Caco-2 (cell line): ENCODE measurements at regions of chr1 and their contacts with region 1.

Region 1: GRCh38 chr1:186482661-186483255 is 21.8 kb upstream of the PDC start:
- DNase-seq: peak; percentile 67 to 75
- H3K4me3 ChIP-seq: no peak overlapping the region
- H3K4me3 Mint-ChIP-seq: no peak overlapping the region
- H3K27ac Mint-ChIP-seq: no peak overlapping the region
- H3K4me1 ChIP-seq: peaks cover 53% of the 10 kb centered on the region
- H3K4me1 Mint-ChIP-seq: peaks cover 37% of the 10 kb centered on the region
- H3K27me3 ChIP-seq: no peaks in the 10 kb centered on the region
- H3K27me3 Mint-ChIP-seq: no peaks in the 10 kb centered on the region
- CTCF ChIP-seq: peak; percentile 88 to 94

Region 2: DNA sequence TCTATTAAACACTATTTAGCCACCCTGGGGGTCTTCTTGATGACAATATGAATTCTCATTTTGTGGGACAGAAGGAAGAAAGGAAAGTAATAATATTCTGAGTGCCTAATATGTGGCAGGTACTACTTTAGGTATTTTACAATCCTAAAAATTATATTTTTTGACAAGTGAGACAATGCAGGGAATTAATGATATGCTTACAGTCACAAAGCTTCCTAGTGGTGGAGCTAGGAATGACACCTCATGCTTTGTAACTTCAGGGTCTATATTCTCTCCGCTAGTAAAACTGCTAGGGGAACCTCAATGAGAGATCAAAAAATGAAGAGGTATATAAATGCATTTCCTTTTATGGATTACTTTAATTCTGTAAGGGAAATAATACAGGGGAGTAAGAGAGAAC is 152.0 kb before region 1 on chr1:
- CTCF ChIA-PET with region 1: no interaction called
- POLR2A ChIA-PET with region 1: no interaction called
- intact Hi-C with region 1: no loop called
- DNase-seq: peak in 1 of 2 experiments; percentile 21
- H3K4me3 ChIP-seq: no peak overlapping the region
- H3K4me3 Mint-ChIP-seq: no peak overlapping the region
- H3K27ac Mint-ChIP-seq: no peak overlapping the region
- H3K4me1 ChIP-seq: no peaks in the 10 kb centered on the region
- H3K4me1 Mint-ChIP-seq: no peaks in the 10 kb centered on the region
- H3K27me3 ChIP-seq: no peaks in the 10 kb centered on the region
- H3K27me3 Mint-ChIP-seq: no peaks in the 10 kb centered on the region
- CTCF ChIP-seq: peak; percentile 36 to 44

Region 3: DNA sequence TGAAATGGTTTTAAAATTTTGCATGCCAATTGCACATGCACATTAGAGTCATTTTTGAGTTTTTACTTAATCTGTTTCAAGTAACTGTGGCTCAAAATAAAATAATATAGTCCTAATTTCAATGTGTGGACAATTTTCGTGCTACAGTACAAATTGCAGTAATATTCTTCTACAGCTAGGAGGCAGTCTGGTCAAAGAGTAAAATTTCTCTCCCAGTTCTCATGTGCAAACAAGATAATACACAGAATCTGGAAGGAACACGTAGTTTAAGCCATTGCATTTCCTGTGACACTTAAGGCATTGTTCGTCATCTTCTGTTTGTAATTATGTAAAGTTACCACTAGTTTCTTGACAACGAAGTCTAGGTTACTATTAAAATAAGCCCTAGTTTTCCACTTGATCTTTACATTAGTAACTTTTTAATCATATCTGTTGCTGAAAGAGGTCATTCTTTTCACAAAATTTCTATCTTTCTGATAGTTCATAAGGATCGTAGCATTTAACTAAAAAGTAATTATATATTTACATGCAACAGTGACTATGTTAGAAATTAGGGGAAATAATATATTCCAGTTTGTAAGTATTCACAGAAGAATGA is 78.2 kb before region 1 on chr1:
- CTCF ChIA-PET with region 1: interaction called, 5 read pairs
- POLR2A ChIA-PET with region 1: no interaction called
- intact Hi-C with region 1: loop called (anchors 2 kb)
- DNase-seq: peak in 1 of 2 experiments; percentile 43
- H3K4me3 ChIP-seq: no peak overlapping the region
- H3K4me3 Mint-ChIP-seq: no peak overlapping the region
- H3K27ac Mint-ChIP-seq: no peak overlapping the region
- H3K4me1 ChIP-seq: no peaks in the 10 kb centered on the region
- H3K4me1 Mint-ChIP-seq: peaks cover 6% of the 10 kb centered on the region
- H3K27me3 ChIP-seq: no peaks in the 10 kb centered on the region
- H3K27me3 Mint-ChIP-seq: no peaks in the 10 kb centered on the region
- CTCF ChIP-seq: peak; percentile 58 to 63

Region 4: GRCh38 chr1:186569856-186570255 is 87.1 kb after region 1 on chr1:
- CTCF ChIA-PET with region 1: no interaction called
- POLR2A ChIA-PET with region 1: no interaction called
- intact Hi-C with region 1: no loop called
- DNase-seq: no peak
- H3K4me3 ChIP-seq: no peak overlapping the region
- H3K4me3 Mint-ChIP-seq: no peak overlapping the region
- H3K27ac Mint-ChIP-seq: no peak overlapping the region
- H3K4me1 ChIP-seq: peaks cover 8% of the 10 kb centered on the region
- H3K4me1 Mint-ChIP-seq: peaks cover 14% of the 10 kb centered on the region
- H3K27me3 ChIP-seq: no peaks in the 10 kb centered on the region
- H3K27me3 Mint-ChIP-seq: no peaks in the 10 kb centered on the region
- CTCF ChIP-seq: no peak

Region 5: GRCh38 chr1:186605762-186606350 is 123.1 kb after region 1 on chr1:
- CTCF ChIA-PET with region 1: interaction called, 3 read pairs
- POLR2A ChIA-PET with region 1: no interaction called
- intact Hi-C with region 1: loop called (anchors 1 kb)
- DNase-seq: peak; percentile 70 to 72
- H3K4me3 ChIP-seq: no peak overlapping the region
- H3K4me3 Mint-ChIP-seq: no peak overlapping the region
- H3K27ac Mint-ChIP-seq: peak overlapping the region; percentile 43
- H3K4me1 ChIP-seq: peaks cover 16% of the 10 kb centered on the region
- H3K4me1 Mint-ChIP-seq: peaks cover 9% of the 10 kb centered on the region
- H3K27me3 ChIP-seq: no peaks in the 10 kb centered on the region
- H3K27me3 Mint-ChIP-seq: no peaks in the 10 kb centered on the region
- CTCF ChIP-seq: peak; percentile 70 to 71